ENCODE measurements at regions of chr20 and their contacts with region 1.

Region 1: GRCh38 chr20:25508078-25508770 is 77.1 kb downstream of the NINL start:
- DNase-seq: peak; percentile 85
- ATAC-seq: peak; percentile 97
- H3K4me3 ChIP-seq: no peak overlapping the region
- H3K27ac ChIP-seq: peak overlapping the region; percentile 49
- H3K4me1 ChIP-seq: peaks cover 10% of the 10 kb centered on the region
- H3K27me3 ChIP-seq: no peaks in the 10 kb centered on the region
- CTCF ChIP-seq: no peak
- POLR2A ChIP-seq: no peak
- RAD21 ChIP-seq: no peak

Region 2: DNA sequence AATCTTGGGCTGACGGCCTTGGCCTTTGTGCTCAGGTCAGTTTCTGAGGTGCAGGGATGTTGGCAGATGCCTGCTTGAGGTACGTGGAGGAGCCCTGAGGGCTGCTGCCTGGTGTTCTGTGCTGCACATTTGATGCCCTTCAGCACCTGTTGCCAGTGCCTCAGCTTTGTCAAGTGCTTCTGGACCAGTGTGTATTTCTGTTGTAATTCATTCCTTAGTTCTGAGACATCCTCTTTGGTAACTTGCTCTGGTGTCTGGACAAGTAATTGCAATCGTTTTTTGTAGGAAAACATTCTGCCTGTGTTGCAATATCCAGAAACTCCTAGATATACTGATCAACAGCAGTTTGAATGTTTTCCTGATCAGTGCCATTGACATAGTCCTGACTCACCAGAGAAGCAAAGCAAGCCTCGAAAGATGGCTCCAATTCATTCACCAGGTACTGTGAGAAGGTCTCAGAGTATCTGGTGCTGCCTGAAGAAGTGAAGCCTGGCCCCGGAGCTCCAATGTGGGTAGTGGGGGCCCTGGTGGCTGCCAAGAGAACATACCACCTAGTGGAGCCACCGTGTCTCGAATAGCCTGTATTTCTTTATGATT is 161.7 kb after region 1 on chr20:
- CTCF ChIA-PET with region 1: no interaction called
- POLR2A ChIA-PET with region 1: no interaction called
- dilution Hi-C with region 1: no loop called
- in situ Hi-C with region 1: loop called (anchors 25 kb)
- intact Hi-C with region 1: no loop called
- DNase-seq: peak; percentile 87
- ATAC-seq: peak; percentile 94
- H3K4me3 ChIP-seq: no peak overlapping the region
- H3K27ac ChIP-seq: peak overlapping the region; percentile 2; the same call in 1 of the 2 replicates
- H3K4me1 ChIP-seq: peaks cover 2% of the 10 kb centered on the region; the same call in 1 of the 2 replicates
- H3K27me3 ChIP-seq: no peaks in the 10 kb centered on the region
- CTCF ChIP-seq: 0 out of 2 replicates have a peak, but pooled peaks have one; percentile 14
- POLR2A ChIP-seq: no peak
- RAD21 ChIP-seq: no peak